Endothelial cell of umbilical vein (primary cell): ENCODE measurements at regions of chr5 and their contacts with region 1.

Region 1: GRCh38 chr5:139651853-139652787 is 4.0 kb downstream of the CXXC5 start:
- DNase-seq: peak; percentile 73
- H3K4me3 ChIP-seq: no peak overlapping the region
- H3K27ac ChIP-seq: no peak overlapping the region
- H3K4me1 ChIP-seq: peaks cover 29% of the 10 kb centered on the region
- H3K27me3 ChIP-seq: peaks cover 5 to 24% of the 10 kb centered on the region in 2 experiments
- CTCF ChIP-seq: no peak
- POLR2A ChIP-seq: no peak

Region 2: GRCh38 chr5:139670369-139671095 is 18.4 kb after region 1 on chr5:
- CTCF ChIA-PET with region 1: interaction called, 10 read pairs
- POLR2A ChIA-PET with region 1: no interaction called
- dilution Hi-C with region 1: no loop called
- intact Hi-C with region 1: loop called (anchors 1 kb)
- DNase-seq: peak; percentile 33
- H3K4me3 ChIP-seq: no peak overlapping the region
- H3K27ac ChIP-seq: no peak overlapping the region
- H3K4me1 ChIP-seq: peaks cover 32% of the 10 kb centered on the region
- H3K27me3 ChIP-seq: no peaks in the 10 kb centered on the region
- CTCF ChIP-seq: peak; percentile 27 to 43
- POLR2A ChIP-seq: no peak